ENCODE measurements at regions of chr22 and their contacts with region 1.

Region 1: GRCh38 chr22:41106122-41106968 is 14.0 kb downstream of the EP300 start:
- DNase-seq: no peak
- H3K4me3 ChIP-seq: no peak overlapping the region
- H3K27ac ChIP-seq: no peak overlapping the region
- H3K4me1 ChIP-seq: no peaks in the 10 kb centered on the region; a peak in 1 of 7 replicates
- H3K27me3 ChIP-seq: no peaks in the 10 kb centered on the region
- CTCF ChIP-seq: no peak
- EP300 ChIP-seq: no peak
- POLR2A ChIP-seq: no peak
- RAD21 ChIP-seq: no peak

Region 2: GRCh38 chr22:41091132-41092022 is 15.0 kb before region 1 on chr22:
- CTCF ChIA-PET with region 1: interaction called, 4 read pairs
- POLR2A ChIA-PET with region 1: interaction called, 13 read pairs
- DNase-seq: peak; percentile 96 to 98
- H3K4me3 ChIP-seq: peak overlapping the region; percentile 81 to 93 (median 87)
- H3K27ac ChIP-seq: peak overlapping the region; percentile 100
- H3K4me1 ChIP-seq: no peaks in the 10 kb centered on the region; a peak in 3 of 7 replicates
- H3K27me3 ChIP-seq: no peaks in the 10 kb centered on the region
- CTCF ChIP-seq: no peak
- EP300 ChIP-seq: 0 out of 3 replicates have a peak, but pooled peaks of 1 of the 2 experiments have one; percentile 22
- POLR2A ChIP-seq: peak; percentile 78 to 80
- RAD21 ChIP-seq: no peak

Measured in H1 (cell line).